Transverse colon (tissue), 4 donors: ENCODE measurements at regions of chr19 and their contacts with region 1.

Region 1: DNA sequence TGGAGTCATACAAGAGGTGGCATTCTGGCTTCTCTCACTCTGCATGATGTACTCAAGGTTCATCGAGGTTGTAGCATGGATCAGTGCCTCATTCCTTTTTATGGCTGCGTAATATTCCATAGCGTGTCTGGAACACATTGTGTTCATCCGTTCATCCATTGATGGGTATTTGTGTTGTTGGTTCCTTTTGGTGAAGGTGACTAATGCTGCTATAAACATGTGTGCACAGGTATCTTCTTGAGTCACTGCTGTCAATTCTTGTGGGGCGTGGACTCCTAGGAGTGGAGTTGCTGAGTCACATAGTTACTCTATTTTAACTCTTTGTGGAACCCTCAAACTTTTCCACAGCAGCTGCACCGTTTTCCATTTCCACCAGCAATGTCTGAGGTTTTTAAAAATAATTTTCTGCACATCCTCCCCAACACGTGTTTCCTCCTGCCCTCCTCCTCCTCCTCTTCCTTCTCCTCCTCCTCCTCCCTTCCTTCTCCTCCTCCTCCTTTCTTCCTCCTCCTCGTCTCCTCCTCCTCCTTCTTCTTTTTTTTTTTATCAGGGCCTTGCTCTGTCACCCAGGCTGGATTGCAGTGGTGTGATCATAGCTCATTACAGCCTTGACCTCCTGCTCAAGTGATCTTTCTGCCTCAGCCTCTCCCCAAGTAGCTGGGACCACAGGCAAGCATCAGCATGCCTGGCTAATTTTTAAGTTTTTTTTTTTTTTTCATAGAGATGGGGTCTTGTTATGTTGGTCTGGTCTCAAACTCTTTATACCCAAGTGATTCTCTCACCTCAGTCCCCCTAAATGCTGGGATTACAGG is 2.0 kb upstream of the TMEM221 start:
- DNase-seq: no peak
- H3K4me3 ChIP-seq: no peak overlapping the region
- H3K27ac ChIP-seq: no peak overlapping the region
- H3K4me1 ChIP-seq: peaks cover 0 to 8% (median 6%) of the 10 kb centered on the region in 4 donors
- H3K27me3 ChIP-seq: peaks cover 31% of the 10 kb centered on the region
- CTCF ChIP-seq: no peak
- EP300 ChIP-seq: no peak
- POLR2A ChIP-seq: no peak

Region 2: GRCh38 chr19:17511724-17512573 is 61.5 kb after region 1 on chr19:
- in situ Hi-C with region 1: no loop called
- intact Hi-C with region 1: loop called (anchors 5 kb)
- DNase-seq: peak; percentile 90
- H3K4me3 ChIP-seq: peak overlapping the region; percentile 74 to 95 (median 85)
- H3K27ac ChIP-seq: peak overlapping the region; percentile 96 to 99 (median 98)
- H3K4me1 ChIP-seq: peaks cover 0 to 36% (median 20%) of the 10 kb centered on the region in 4 donors
- H3K27me3 ChIP-seq: no peaks in the 10 kb centered on the region
- CTCF ChIP-seq: peak in 2 of 5 experiments; percentile 12 to 13
- EP300 ChIP-seq: no peak
- POLR2A ChIP-seq: peak; percentile 56